ENCODE measurements at regions of chr4 and their contacts with region 1.

Region 1: DNA sequence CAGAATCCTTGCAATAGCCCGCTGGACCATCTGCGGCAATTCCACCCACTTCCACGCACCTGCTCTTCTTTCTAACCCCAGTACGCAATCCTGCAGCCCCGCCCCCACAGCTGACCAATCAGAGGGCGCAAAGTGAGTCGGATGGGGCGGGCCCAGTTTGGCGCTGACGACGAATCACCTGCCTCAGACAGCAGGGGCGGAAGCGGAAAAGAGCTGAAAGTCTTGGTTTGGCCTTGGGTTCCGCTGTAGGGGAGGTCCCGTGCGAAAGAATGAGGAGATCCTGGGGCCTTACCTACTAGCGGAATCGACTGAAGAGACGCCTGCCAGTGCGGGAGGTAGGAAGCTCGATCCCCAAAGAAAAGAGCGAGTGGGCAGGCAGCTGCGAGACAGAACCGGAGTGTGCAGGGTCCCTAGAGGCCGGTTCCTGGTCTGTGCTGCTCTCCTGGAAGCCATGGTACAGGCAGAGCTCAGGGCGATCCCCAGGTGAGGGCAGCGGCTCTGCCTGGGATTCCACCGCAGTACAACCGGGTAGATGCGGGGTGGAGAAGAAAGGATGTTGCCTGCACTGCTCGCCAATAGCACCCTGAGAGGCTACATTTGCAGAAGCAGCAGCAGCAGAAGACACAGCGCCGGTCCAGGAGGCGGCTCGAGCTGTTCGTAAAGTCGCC is at the start of gene TMEM184C:
- DNase-seq: peak; percentile 89
- ATAC-seq: peak; percentile 98
- H3K4me3 ChIP-seq: peak within 1 kb of the TSS; percentile 76
- H3K27ac ChIP-seq: peak within 1 kb of the TSS; percentile 90
- H3K4me1 ChIP-seq: no peaks in the 10 kb centered on the region
- H3K27me3 ChIP-seq: no peaks in the 10 kb centered on the region
- CTCF ChIP-seq: no peak
- EP300 ChIP-seq: peak in 1 of 2 experiments; percentile 14; a peak in 1 of 4 replicates
- POLR2A ChIP-seq: peak; percentile 93
- RAD21 ChIP-seq: no peak
- polyA plus RNA-seq, gene TMEM184C: 3.4 to 4.1 TPM

Region 2: GRCh38 chr4:147371661-147372060 is 245.6 kb before region 1 on chr4:
- CTCF ChIA-PET with region 1: no interaction called
- POLR2A ChIA-PET with region 1: no interaction called
- RAD21 ChIA-PET with region 1: no interaction called
- SMC1A ChIA-PET with region 1: no interaction called
- in situ Hi-C with region 1: no loop called
- intact Hi-C with region 1: no loop called
- DNase-seq: no peak
- ATAC-seq: no peak
- H3K4me3 ChIP-seq: no peak overlapping the region
- H3K27ac ChIP-seq: no peak overlapping the region
- H3K4me1 ChIP-seq: no peaks in the 10 kb centered on the region
- H3K27me3 ChIP-seq: no peaks in the 10 kb centered on the region
- CTCF ChIP-seq: no peak
- EP300 ChIP-seq: no peak
- POLR2A ChIP-seq: no peak
- RAD21 ChIP-seq: no peak

Region 3: DNA sequence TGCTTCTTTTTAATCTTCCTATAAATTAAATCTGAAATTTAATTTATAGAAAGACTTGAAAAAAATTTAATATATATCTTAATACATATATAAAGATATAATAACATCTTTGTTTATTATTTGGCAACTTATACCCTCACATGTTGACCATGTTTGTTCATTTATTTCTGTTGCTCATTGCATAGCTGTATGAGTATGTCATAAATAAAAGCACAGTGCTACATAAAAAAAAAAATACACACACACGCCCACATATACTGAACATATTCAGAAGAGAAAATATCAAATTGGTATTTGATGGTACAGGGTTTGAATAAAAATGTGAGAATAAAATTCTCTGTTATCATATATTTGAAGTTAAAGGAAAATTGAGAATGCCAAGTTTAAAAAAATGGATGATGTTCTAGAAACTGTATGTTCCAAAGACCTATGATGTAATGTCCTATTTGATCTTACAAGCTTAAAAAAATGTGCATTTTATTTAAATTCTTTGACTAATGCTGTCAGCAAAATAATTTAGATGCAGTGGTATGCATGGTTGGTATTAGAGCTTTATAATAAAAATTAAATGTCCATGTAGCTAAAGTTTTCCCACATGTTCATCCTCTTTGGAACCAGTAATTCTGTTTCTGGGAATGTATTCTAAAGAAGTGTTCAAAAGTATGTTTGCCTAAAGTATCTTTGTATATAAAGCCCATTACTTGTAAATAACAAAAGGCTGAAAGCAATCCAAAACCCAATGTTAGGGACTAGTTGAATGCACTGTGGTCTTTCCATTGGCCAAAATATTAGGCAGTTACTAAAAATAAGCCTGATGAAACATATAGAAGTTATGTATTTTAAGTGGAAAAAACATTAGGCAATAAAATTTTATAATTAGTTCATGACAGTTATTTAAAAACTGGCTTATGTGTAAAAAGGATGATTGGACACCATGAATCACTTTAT is 12.8 kb after region 1 on chr4:
- CTCF ChIA-PET with region 1: interaction called, 3 read pairs
- POLR2A ChIA-PET with region 1: interaction called, 13 read pairs
- RAD21 ChIA-PET with region 1: interaction called, 3 read pairs
- SMC1A ChIA-PET with region 1: interaction called, 19 read pairs
- in situ Hi-C with region 1: no loop called
- intact Hi-C with region 1: no loop called
- DNase-seq: no peak
- ATAC-seq: no peak
- H3K4me3 ChIP-seq: no peak overlapping the region
- H3K27ac ChIP-seq: no peak overlapping the region
- H3K4me1 ChIP-seq: no peaks in the 10 kb centered on the region
- H3K27me3 ChIP-seq: no peaks in the 10 kb centered on the region
- CTCF ChIP-seq: no peak
- EP300 ChIP-seq: no peak
- POLR2A ChIP-seq: no peak
- RAD21 ChIP-seq: no peak

Region 4: DNA sequence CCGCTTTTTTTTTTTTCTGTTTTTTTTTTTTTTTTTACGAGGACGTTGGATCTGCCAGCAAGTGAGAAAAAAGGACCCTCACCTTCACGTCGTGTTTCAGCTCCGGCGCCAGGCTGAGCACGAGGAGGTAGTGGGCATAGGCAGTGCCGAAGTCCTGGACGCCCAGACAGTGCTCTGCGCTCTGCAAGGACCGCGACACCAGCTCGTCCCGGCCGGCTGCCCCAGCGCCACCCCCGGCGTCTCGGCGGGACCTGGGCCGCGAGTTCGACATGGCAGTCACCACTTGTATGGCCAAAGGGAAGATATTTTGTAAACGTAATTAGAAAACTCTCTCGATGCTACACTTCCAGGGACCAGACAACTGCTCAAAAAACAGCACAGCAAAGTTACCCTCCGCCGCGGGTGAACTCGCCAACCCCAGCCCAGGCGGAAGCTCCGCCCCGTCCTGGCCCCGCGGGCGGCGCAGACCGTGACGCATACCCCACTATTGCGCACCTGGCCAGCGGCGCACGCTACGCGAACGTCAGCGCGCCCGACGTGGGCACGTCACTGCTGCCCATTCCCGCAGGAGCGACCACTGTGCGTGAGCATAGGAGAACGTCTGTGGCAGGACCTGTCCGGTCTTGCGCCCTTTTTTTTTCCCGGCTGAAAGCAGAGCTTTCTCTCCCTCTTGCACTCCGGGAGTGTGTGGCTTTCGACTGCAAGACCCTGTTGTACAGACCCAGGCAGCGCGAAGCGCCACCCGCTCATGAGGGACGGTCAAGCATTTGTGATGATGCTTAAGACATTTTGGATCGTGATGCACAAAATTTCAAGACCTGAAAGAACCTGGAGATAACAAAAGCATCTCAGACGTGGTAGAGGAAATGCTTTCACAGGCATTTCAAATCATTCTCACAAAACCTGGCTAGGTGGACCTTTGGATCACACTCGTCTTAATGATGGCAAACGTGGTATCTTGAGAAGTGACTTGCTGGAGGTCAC is 66.7 kb after region 1 on chr4 and contains the start of gene PRMT9:
- CTCF ChIA-PET with region 1: interaction called, 3 read pairs
- POLR2A ChIA-PET with region 1: interaction called, 11 read pairs
- RAD21 ChIA-PET with region 1: interaction called, 16 read pairs
- SMC1A ChIA-PET with region 1: interaction called, 15 read pairs
- in situ Hi-C with region 1: no loop called
- intact Hi-C with region 1: no loop called
- DNase-seq: peak; percentile 74
- ATAC-seq: peak; percentile 97
- H3K4me3 ChIP-seq: peak within 1 kb of the TSS; percentile 90
- H3K27ac ChIP-seq: peak within 1 kb of the TSS; percentile 65
- H3K4me1 ChIP-seq: peaks cover 3% of the 10 kb centered on the region
- H3K27me3 ChIP-seq: no peaks in the 10 kb centered on the region
- CTCF ChIP-seq: no peak
- EP300 ChIP-seq: peak; percentile 70 to 79; a peak in 3 of 4 replicates
- POLR2A ChIP-seq: peak; percentile 95
- RAD21 ChIP-seq: no peak
- polyA plus RNA-seq, gene PRMT9: 4.1 to 4.3 TPM